CD8-positive, alpha-beta memory T cell (primary cell): ENCODE measurements at regions of chr16 and their contacts with region 1.

Region 1: GRCh38 chr16:3282730-3283524 is at the start of gene ZNF263:
- DNase-seq: peak; percentile 87 to 95 (median 94)
- H3K4me3 ChIP-seq: peak within 1 kb of the TSS; percentile 91
- H3K4me3 Mint-ChIP-seq: peak within 1 kb of the TSS; percentile 88 to 97 (median 96)
- H3K27ac ChIP-seq: peak within 1 kb of the TSS; percentile 95
- H3K27ac Mint-ChIP-seq: peak within 1 kb of the TSS; percentile 84 to 99 (median 96)
- H3K4me1 ChIP-seq: peaks cover 25% of the 10 kb centered on the region
- H3K4me1 Mint-ChIP-seq: peaks cover 35 to 48% (median 41%) of the 10 kb centered on the region in 3 donors
- H3K27me3 ChIP-seq: no peaks in the 10 kb centered on the region
- H3K27me3 Mint-ChIP-seq: peaks cover 0 to 4% of the 10 kb centered on the region in 2 donors
- total RNA-seq, gene ZNF263: 29.2 to 35.1 TPM

Region 2: DNA sequence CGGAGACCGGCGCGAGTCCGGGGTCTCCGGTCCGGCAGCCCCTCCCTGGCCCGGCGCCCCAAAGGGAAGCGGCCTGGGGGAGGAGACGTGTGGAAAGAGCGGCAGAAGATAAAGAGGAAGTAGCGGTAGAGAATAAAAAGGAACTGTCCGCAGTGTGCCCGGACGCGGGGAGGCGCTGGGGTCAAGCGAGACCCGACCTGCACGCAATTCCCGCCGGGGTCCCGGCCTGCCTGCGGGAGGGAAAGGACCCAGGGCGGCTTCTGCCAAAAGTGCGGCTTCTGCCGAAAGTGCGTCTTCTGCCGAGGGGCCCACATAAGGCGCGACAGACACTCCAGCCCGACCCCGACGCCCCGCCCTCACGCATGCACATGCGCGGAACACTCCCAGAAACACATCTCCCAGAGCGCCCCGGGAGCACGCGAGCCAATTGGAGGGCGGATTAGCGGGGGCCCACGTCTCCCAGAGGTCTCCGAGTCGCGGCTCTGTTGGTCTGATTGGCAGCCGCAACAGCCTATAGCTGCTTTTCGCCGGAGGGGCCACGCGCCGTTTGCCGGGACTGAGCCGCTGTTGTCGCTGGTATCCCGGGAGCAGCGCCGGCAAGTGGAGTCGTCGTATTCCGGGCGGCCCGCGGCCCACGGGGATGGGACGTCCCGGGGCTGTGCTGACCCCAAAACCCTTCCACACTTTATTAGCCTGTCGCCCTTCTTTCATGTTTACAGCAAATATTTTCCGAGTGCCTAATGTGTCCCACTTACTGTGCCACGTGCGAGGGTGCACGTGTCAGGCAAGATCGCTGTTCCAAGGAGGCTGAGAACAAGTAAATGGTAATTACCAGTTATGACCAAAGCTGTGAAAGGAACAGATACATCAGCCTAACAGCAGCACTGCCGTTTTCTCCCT is 18.5 kb before region 1 on chr16:
- CTCF ChIA-PET with region 1: interaction called, 10 read pairs
- POLR2A ChIA-PET with region 1: interaction called, 13 read pairs
- DNase-seq: peak; percentile 95 to 98 (median 96)
- H3K4me3 ChIP-seq: peak overlapping the region; percentile 67
- H3K4me3 Mint-ChIP-seq: peak overlapping the region; percentile 88 to 94 (median 91)
- H3K27ac ChIP-seq: peak overlapping the region; percentile 91
- H3K27ac Mint-ChIP-seq: peak overlapping the region; percentile 92 to 99 (median 95)
- H3K4me1 ChIP-seq: peaks cover 23% of the 10 kb centered on the region
- H3K4me1 Mint-ChIP-seq: peaks cover 29 to 53% (median 39%) of the 10 kb centered on the region in 3 donors
- H3K27me3 ChIP-seq: no peaks in the 10 kb centered on the region
- H3K27me3 Mint-ChIP-seq: no peaks in the 10 kb centered on the region

Region 3: DNA sequence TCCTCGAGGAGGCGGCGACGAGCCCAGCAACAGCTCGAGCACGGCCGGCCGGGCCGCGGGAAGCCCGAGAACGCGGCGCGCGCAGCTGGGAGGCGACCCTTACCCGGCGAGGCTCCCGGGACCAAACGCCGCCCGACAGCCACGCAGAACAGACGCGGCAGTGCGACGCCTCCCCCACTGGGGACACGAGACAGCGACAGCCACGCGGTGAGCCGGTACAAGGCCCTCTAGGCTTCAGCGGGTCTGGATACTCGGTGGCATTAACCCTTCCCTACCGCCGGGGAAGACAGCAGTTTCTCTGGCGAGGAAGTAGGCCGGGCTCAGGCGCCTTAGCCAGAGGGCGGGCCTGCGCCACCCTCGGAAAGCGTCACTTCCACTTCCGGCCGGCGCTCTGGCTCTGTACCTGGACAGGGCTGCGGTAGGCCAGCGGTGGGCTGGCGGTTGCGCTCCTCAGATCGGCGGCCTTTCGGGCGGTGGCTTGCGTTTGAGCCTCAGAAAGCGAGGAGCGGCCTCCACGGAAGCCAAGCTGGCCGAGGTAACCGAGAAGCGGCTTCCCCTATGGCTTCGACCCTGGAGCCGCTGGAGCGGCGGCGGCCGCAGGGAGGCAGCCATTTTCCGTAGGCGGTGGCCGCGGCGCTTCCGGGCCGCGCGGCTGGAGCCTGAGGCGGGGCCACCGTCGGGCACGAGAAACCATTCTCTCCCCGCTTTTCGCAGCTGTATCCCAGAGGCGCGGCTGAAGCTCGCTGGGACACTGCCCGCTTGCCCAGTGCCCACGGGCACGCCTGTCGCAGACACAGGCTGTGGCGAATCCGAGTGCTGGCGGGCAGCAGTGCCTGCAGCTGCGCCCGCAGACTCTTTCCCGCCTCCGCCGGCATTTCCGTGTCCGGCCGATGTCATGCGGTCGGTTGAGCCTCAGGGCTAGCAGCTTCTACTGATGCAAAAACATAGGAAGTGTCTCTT is 22.5 kb after region 1 on chr16 and contains the starts of genes TIGD7 and ZNF75A:
- CTCF ChIA-PET with region 1: interaction called, 5 read pairs
- POLR2A ChIA-PET with region 1: interaction called, 21 read pairs
- DNase-seq: peak; percentile 68 to 90 (median 83)
- H3K4me3 ChIP-seq: peak within 1 kb of the TSS; percentile 72
- H3K4me3 Mint-ChIP-seq: peak within 1 kb of the TSS; percentile 79 to 93 (median 85)
- H3K27ac ChIP-seq: peak within 1 kb of the TSS; percentile 82
- H3K27ac Mint-ChIP-seq: peak within 1 kb of the TSS; percentile 63 to 90 (median 86)
- H3K4me1 ChIP-seq: peaks cover 18% of the 10 kb centered on the region
- H3K4me1 Mint-ChIP-seq: peaks cover 16 to 38% (median 24%) of the 10 kb centered on the region in 3 donors
- H3K27me3 ChIP-seq: no peaks in the 10 kb centered on the region
- H3K27me3 Mint-ChIP-seq: no peaks in the 10 kb centered on the region
- total RNA-seq, gene TIGD7: 5.1 to 5.2 TPM
- total RNA-seq, gene ZNF75A: 37.9 to 42.0 TPM